CD14-positive monocyte (primary cell): ENCODE measurements at regions of chr11 and their contacts with region 1.

Region 1: DNA sequence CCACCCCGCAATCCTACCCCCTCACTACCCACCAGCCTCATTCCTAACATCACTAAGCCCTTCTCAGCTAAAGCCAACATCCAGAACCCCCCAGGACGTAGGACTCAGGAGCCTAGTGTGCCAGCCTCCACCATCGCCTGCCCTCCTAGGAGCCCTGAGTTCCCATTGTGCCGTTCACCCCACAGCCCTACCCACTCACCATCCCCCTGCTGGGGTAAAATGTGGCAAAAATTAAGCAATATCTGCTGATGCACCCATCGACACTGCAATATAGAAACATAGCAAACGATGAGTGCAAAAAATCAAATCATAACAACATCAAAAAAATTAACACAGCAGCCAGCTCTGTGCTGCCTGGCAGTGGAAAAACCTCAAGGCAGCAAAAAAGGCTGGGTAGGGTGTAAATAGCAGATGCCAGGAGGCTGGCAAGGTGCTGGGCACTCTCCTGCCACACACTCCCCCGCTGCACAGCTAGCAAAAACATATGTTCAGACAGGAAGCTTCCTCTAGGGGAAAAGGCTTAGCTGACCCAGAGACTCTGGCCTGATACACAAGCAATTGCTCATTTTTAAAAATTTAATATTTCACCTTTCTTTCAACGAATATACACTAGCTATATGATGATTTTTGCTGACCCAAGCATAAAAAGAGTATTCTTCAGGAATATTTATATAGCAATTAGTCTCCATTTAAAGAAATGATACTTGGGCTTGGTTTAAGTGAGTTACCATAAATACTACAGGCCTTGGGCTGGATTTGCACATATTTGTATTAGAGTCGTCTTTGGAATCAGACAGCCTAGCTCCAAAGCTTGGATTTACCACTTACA is 33.8 kb downstream of the PRDM10 start:
- DNase-seq: peak; percentile 23 to 46 (median 43)
- H3K4me3 ChIP-seq: peak overlapping the region in 1 of 3 experiments; percentile 53
- H3K4me3 Mint-ChIP-seq: peak overlapping the region; percentile 57 to 62
- H3K27ac ChIP-seq: peak overlapping the region; percentile 32 to 66
- H3K27ac Mint-ChIP-seq: peak overlapping the region; percentile 70 to 93 (median 80)
- H3K4me1 ChIP-seq: peaks cover 50 to 65% of the 10 kb centered on the region in 2 donors
- H3K4me1 Mint-ChIP-seq: peaks cover 70% of the 10 kb centered on the region
- H3K27me3 ChIP-seq: no peaks in the 10 kb centered on the region
- H3K27me3 Mint-ChIP-seq: no peaks in the 10 kb centered on the region
- CTCF ChIP-seq: no peak

Region 2: GRCh38 chr11:129750349-129751292 is 218.2 kb before region 1 on chr11:
- intact Hi-C with region 1: no loop called
- DNase-seq: peak; percentile 67 to 81 (median 70)
- H3K4me3 ChIP-seq: peak overlapping the region in 1 of 3 experiments; percentile 58
- H3K4me3 Mint-ChIP-seq: peak overlapping the region; percentile 60 to 70
- H3K27ac ChIP-seq: no peak overlapping the region
- H3K27ac Mint-ChIP-seq: no peak overlapping the region
- H3K4me1 ChIP-seq: peaks cover 7 to 8% of the 10 kb centered on the region in 2 donors
- H3K4me1 Mint-ChIP-seq: peaks cover 6% of the 10 kb centered on the region
- H3K27me3 ChIP-seq: peaks cover 16 to 30% of the 10 kb centered on the region in 2 donors
- H3K27me3 Mint-ChIP-seq: peaks cover 21 to 50% (median 34%) of the 10 kb centered on the region in 3 donors
- CTCF ChIP-seq: peak; percentile 100

Region 3: GRCh38 chr11:129930296-129930695 is 38.5 kb before region 1 on chr11:
- intact Hi-C with region 1: loop called in 1 of 2 experiments (anchors 5 kb)
- DNase-seq: peak; percentile 59 to 90 (median 76)
- H3K4me3 ChIP-seq: peak overlapping the region in 1 of 3 experiments; percentile 61
- H3K4me3 Mint-ChIP-seq: peak overlapping the region in 1 of 2 donors; percentile 69
- H3K27ac ChIP-seq: peak overlapping the region; percentile 86 to 91
- H3K27ac Mint-ChIP-seq: peak overlapping the region; percentile 90 to 95 (median 93)
- H3K4me1 ChIP-seq: peaks cover 35 to 46% of the 10 kb centered on the region in 2 donors
- H3K4me1 Mint-ChIP-seq: peaks cover 45% of the 10 kb centered on the region
- H3K27me3 ChIP-seq: no peaks in the 10 kb centered on the region
- H3K27me3 Mint-ChIP-seq: no peaks in the 10 kb centered on the region
- CTCF ChIP-seq: no peak

Region 4: GRCh38 chr11:130087294-130087926 is 118.6 kb after region 1 on chr11:
- intact Hi-C with region 1: no loop called
- DNase-seq: peak in 1 of 3 donors; percentile 31
- H3K4me3 ChIP-seq: peak overlapping the region in 1 of 3 experiments; percentile 59
- H3K4me3 Mint-ChIP-seq: peak overlapping the region; percentile 51 to 74
- H3K27ac ChIP-seq: peak overlapping the region; percentile 46 to 81
- H3K27ac Mint-ChIP-seq: peak overlapping the region; percentile 81 to 92 (median 87)
- H3K4me1 ChIP-seq: peaks cover 51 to 73% of the 10 kb centered on the region in 2 donors
- H3K4me1 Mint-ChIP-seq: peaks cover 64% of the 10 kb centered on the region
- H3K27me3 ChIP-seq: no peaks in the 10 kb centered on the region
- H3K27me3 Mint-ChIP-seq: peaks cover 0 to 1% (median 0%) of the 10 kb centered on the region in 3 donors
- CTCF ChIP-seq: no peak